ENCODE measurements at regions of chr20 and their contacts with region 1.

Region 1: GRCh38 chr20:64038565-64039292 is 2.7 kb downstream of the C20orf204 start:
- DNase-seq: peak; percentile 79
- H3K4me3 Mint-ChIP-seq: peak overlapping the region; percentile 63
- H3K27ac Mint-ChIP-seq: peak overlapping the region; percentile 80
- H3K4me1 Mint-ChIP-seq: peaks cover 72% of the 10 kb centered on the region
- H3K27me3 Mint-ChIP-seq: no peaks in the 10 kb centered on the region

Region 2: GRCh38 chr20:63973636-63974402 is 64.9 kb before region 1 on chr20:
- CTCF ChIA-PET with region 1: interaction called, 64 read pairs
- POLR2A ChIA-PET with region 1: interaction called, 17 read pairs
- DNase-seq: peak; percentile 77
- H3K4me3 Mint-ChIP-seq: no peak overlapping the region
- H3K27ac Mint-ChIP-seq: no peak overlapping the region
- H3K4me1 Mint-ChIP-seq: peaks cover 47% of the 10 kb centered on the region
- H3K27me3 Mint-ChIP-seq: peaks cover 2% of the 10 kb centered on the region

Region 3: GRCh38 chr20:63980806-63981728 is 57.7 kb before region 1 on chr20 and contains the start of gene PRPF6:
- CTCF ChIA-PET with region 1: interaction called, 64 read pairs
- POLR2A ChIA-PET with region 1: interaction called, 17 read pairs
- DNase-seq: peak; percentile 96
- H3K4me3 Mint-ChIP-seq: peak within 1 kb of the TSS; percentile 94
- H3K27ac Mint-ChIP-seq: peak within 1 kb of the TSS; percentile 98
- H3K4me1 Mint-ChIP-seq: peaks cover 62% of the 10 kb centered on the region
- H3K27me3 Mint-ChIP-seq: no peaks in the 10 kb centered on the region
- total RNA-seq, gene PRPF6: 67.1 to 70.8 TPM

Region 4: GRCh38 chr20:64027981-64028685 is 10.6 kb before region 1 on chr20:
- CTCF ChIA-PET with region 1: interaction called, 29 read pairs
- POLR2A ChIA-PET with region 1: no interaction called
- DNase-seq: no peak
- H3K4me3 Mint-ChIP-seq: no peak overlapping the region
- H3K27ac Mint-ChIP-seq: no peak overlapping the region
- H3K4me1 Mint-ChIP-seq: no peaks in the 10 kb centered on the region
- H3K27me3 Mint-ChIP-seq: no peaks in the 10 kb centered on the region

Region 5: DNA sequence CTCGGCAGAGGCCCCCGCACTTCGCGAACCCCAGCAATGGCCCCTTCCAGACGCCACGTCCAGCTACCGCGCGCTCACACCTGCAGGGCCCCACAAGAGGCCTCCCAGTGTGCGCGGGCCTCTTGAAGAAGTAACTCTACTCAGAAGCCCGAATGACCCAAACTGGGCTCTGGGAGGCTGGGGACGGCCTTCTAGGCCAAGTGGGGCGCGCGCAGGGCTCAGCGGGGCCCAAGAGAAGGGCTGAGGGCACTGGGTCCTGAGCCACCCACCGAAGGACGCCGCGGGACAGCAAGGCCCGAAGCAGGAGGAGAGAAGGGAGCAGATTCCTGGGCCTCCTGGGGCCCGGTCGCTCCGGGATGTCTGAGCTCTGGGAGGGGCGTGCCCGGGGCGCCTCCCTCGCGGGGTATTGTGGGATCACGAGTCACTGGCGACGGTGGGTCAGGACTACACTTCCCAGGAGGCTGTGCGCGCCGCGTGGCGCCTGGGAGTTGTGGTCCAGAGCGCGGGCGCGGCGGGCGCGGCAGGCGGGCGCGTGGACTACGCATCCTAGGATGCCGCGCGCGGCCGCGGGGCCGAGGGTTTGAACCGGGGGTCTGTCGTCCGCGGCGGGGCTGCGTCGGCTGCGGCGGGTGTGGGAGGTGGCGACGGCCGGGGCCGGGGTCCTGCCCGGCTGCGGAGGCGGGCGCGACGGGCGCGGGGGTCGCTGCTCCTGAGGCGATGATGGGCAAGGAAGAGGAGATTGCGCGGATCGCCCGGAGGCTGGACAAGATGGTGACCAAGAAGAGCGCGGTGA is 24.1 kb after region 1 on chr20 and contains the start of gene TCEA2:
- CTCF ChIA-PET with region 1: interaction called, 79 read pairs
- POLR2A ChIA-PET with region 1: interaction called, 4 read pairs
- DNase-seq: peak; percentile 96
- H3K4me3 Mint-ChIP-seq: peak within 1 kb of the TSS; percentile 92
- H3K27ac Mint-ChIP-seq: peak within 1 kb of the TSS; percentile 91
- H3K4me1 Mint-ChIP-seq: peaks cover 64% of the 10 kb centered on the region
- H3K27me3 Mint-ChIP-seq: no peaks in the 10 kb centered on the region
- total RNA-seq, gene TCEA2: 47.6 to 57.9 TPM

Region 6: DNA sequence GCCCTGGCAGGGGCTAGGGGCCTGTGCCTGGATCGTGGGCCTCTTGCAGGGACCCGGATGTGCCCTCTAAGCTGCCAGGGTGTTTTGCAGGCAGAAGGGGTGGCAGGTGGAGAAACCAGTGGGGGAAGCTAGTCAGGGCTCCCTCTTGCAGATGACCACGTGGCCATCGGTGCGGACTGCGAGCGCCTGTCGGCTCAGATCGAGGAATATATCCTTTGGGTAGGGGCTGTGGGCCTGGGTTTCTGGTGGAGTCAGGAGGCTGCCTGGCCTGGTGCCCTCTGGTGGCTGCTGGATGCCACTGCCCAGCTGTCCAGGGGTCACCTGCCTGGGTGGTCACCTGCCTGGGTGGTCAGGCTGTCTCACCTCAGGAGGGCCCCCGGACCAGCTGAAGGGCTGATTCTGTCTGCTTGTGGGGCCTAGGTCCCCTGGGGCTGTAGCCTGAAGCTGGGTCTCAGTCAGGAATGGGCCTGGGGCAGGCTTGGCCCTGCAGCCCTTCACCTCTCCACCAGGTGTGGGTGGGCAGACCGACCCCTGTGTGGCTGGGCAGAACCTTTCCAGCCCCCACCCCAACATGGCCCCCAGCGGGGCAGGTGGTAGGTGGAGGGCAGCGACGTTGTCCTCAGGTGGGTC is 31.0 kb after region 1 on chr20:
- CTCF ChIA-PET with region 1: interaction called, 11 read pairs
- POLR2A ChIA-PET with region 1: no interaction called
- DNase-seq: no peak
- H3K4me3 Mint-ChIP-seq: no peak overlapping the region
- H3K27ac Mint-ChIP-seq: no peak overlapping the region
- H3K4me1 Mint-ChIP-seq: peaks cover 58% of the 10 kb centered on the region
- H3K27me3 Mint-ChIP-seq: no peaks in the 10 kb centered on the region

Region 7: DNA sequence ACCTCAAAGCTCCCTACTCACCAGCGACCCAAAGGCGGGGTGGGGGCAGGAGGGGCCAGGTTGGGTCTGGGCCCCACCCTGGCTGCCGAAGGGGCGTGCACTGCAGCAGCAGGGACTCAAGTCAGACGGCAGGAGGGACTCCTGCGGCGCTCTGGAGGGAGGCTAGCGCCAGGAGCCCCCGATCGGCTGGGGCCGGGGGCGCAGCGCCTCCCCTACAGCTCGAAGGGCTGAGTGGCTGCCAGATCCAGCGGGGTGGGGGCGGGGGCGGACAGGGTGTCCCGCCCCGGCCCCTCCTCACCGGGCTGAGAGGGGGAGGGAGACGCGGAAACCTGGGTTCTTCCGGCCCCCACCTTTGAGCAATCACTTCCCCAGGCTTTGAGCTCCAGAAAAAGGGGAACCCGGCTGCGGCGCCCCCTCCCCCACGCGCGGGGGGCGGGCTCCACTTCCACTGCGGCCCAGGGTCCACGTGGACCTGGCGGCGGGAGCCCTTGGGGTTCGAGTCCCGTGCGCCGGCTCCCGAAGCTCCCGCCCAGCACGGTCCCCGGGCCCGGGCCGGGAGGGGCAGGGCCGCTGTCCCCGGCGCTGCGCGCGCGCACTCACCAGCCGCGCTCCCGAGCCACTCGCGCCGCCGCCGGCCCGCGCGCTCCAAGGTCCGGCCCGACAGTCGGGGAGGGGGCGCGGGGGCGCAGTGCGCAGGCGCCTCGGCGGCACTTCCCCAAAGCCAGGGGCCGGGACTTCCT is 40.7 kb after region 1 on chr20 and contains the start of gene RGS19:
- CTCF ChIA-PET with region 1: interaction called, 30 read pairs
- POLR2A ChIA-PET with region 1: interaction called, 3 read pairs
- DNase-seq: peak; percentile 81
- H3K4me3 Mint-ChIP-seq: peak within 1 kb of the TSS; percentile 90
- H3K27ac Mint-ChIP-seq: peak within 1 kb of the TSS; percentile 83
- H3K4me1 Mint-ChIP-seq: peaks cover 50% of the 10 kb centered on the region
- H3K27me3 Mint-ChIP-seq: peaks cover 12% of the 10 kb centered on the region
- total RNA-seq, gene RGS19: 105 to 107 TPM

Region 8: GRCh38 chr20:64131406-64131805 is 92.7 kb after region 1 on chr20:
- CTCF ChIA-PET with region 1: no interaction called
- POLR2A ChIA-PET with region 1: no interaction called
- DNase-seq: no peak
- H3K4me3 Mint-ChIP-seq: no peak overlapping the region
- H3K27ac Mint-ChIP-seq: no peak overlapping the region
- H3K4me1 Mint-ChIP-seq: no peaks in the 10 kb centered on the region
- H3K27me3 Mint-ChIP-seq: peaks cover 15% of the 10 kb centered on the region

Measured in activated CD4-positive, alpha-beta T cell treated with anti-CD3 and anti-CD28 coated beads, Interleukin-2, amount 10 ng/mL, durations not matched to agents 7 days and 5 days (primary cell).